ENCODE measurements at regions of chr15 and their contacts with region 1.

Region 1: GRCh38 chr15:60585743-60586708 is 107.1 kb upstream of the ICE2 start:
- DNase-seq: peak; percentile 76 to 80
- H3K4me3 ChIP-seq: no peak overlapping the region
- H3K4me1 ChIP-seq: peaks cover 66% of the 10 kb centered on the region
- H3K27me3 ChIP-seq: no peaks in the 10 kb centered on the region

Region 2: DNA sequence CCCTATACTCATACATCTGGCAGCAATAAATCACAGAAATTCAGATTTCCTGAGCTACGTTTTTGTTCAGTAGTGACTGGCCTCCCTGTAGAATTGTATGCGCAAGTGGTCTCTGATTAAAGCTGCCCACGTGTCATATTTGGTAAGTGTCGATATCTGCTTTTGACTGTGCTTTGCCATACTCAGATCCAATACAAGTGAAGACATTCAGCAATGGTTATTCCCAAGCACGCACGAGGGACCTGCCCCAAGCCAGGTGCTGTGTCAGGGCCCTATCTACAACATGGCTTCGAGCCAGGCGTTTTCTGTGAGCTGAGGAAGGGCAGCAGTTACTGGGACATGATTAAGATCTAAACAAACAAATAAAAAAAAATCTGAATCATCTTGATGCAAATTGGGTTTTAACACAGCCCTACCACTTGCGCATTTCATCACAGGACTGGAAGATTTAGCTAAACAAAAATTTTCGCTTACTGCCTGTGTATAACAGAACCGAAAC is 59.9 kb before region 1 on chr15:
- in situ Hi-C with region 1: loop called (anchors 5 kb)
- DNase-seq: peak; percentile 38 to 77
- H3K4me3 ChIP-seq: no peak overlapping the region
- H3K4me1 ChIP-seq: peaks cover 33% of the 10 kb centered on the region
- H3K27me3 ChIP-seq: no peaks in the 10 kb centered on the region

Region 3: GRCh38 chr15:60916679-60917460 is 330.8 kb after region 1 on chr15:
- in situ Hi-C with region 1: loop called (anchors 10 kb)
- DNase-seq: peak; percentile 76 to 88
- H3K4me3 ChIP-seq: no peak overlapping the region
- H3K4me1 ChIP-seq: no peaks in the 10 kb centered on the region
- H3K27me3 ChIP-seq: no peaks in the 10 kb centered on the region

Measured in HAP-1 (cell line).